Prostate gland (tissue), 2 donors: ENCODE measurements at regions of chr5 and their contacts with region 1.

Region 1: GRCh38 chr5:128213340-128213739 is 129.8 kb downstream of the SLC12A2 start:
- DNase-seq: peak; percentile 58
- H3K4me3 ChIP-seq: no peak overlapping the region
- H3K27ac ChIP-seq: no peak overlapping the region
- H3K4me1 ChIP-seq: no peaks in the 10 kb centered on the region
- H3K27me3 ChIP-seq: no peaks in the 10 kb centered on the region
- CTCF ChIP-seq: peak in 3 of 4 experiments; percentile 66 to 83 (median 72)
- POLR2A ChIP-seq: no peak

Region 2: GRCh38 chr5:128498844-128499455 is 285.6 kb after region 1 on chr5:
- intact Hi-C with region 1: loop called (anchors 2 kb)
- DNase-seq: peak; percentile 45
- H3K4me3 ChIP-seq: no peak overlapping the region
- H3K27ac ChIP-seq: no peak overlapping the region
- H3K4me1 ChIP-seq: no peaks in the 10 kb centered on the region
- H3K27me3 ChIP-seq: no peaks in the 10 kb centered on the region
- CTCF ChIP-seq: peak in 3 of 4 experiments; percentile 52 to 74 (median 56)
- POLR2A ChIP-seq: no peak

Region 3: DNA sequence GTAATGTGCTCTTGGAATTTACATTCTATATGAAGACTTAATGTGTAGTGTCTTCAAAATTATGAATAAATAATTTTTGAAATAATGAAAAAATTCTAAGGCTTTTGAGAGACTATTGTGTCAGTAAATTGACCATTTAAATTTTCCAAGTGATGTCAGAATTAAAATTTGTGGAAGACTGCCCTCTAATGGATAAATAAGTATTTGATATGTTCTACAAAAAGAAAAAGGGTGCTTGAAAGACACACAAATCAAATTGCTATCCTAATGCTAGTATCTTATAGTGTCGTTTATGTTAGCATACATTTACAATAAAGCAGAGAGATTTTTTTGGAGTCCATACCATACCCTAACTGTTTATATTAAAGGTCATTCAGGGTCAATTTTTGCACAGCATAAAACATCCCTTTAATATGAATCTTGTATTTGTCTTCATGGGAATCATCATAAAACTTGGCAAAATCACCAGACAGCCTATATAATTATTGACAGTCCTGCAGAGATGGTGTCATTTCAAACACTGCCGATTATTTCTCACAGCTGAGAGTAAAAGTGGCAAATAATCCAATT is 631.1 kb after region 1 on chr5:
- intact Hi-C with region 1: loop called (anchors 5 kb)
- DNase-seq: no peak
- H3K4me3 ChIP-seq: no peak overlapping the region
- H3K27ac ChIP-seq: no peak overlapping the region
- H3K4me1 ChIP-seq: no peaks in the 10 kb centered on the region
- H3K27me3 ChIP-seq: no peaks in the 10 kb centered on the region
- CTCF ChIP-seq: peak in 3 of 4 experiments; percentile 39 to 53 (median 45)
- POLR2A ChIP-seq: no peak

Region 4: DNA sequence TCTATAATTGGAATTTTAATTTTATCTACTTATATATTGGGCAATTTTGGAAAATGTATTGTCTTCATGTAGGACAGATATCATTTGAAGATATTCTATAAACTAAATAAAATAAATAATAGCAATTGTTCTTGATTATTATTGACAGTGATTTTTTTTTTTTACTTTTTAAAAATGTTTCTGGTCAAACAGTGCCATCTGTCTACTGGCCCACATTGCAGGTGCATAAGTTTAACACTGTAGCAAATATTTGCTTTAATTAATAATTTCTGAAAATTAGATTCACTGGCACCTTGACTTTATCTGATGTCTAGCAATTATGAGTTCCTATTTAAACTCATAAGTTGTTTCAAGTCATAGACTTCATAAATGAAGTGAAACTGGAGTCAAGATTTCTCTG is 840.1 kb after region 1 on chr5:
- intact Hi-C with region 1: no loop called
- DNase-seq: no peak
- H3K4me3 ChIP-seq: no peak overlapping the region
- H3K27ac ChIP-seq: no peak overlapping the region
- H3K4me1 ChIP-seq: no peaks in the 10 kb centered on the region
- H3K27me3 ChIP-seq: no peaks in the 10 kb centered on the region
- CTCF ChIP-seq: no peak
- POLR2A ChIP-seq: no peak